ENCODE measurements at regions of chr17 and their contacts with region 1.

Region 1: DNA sequence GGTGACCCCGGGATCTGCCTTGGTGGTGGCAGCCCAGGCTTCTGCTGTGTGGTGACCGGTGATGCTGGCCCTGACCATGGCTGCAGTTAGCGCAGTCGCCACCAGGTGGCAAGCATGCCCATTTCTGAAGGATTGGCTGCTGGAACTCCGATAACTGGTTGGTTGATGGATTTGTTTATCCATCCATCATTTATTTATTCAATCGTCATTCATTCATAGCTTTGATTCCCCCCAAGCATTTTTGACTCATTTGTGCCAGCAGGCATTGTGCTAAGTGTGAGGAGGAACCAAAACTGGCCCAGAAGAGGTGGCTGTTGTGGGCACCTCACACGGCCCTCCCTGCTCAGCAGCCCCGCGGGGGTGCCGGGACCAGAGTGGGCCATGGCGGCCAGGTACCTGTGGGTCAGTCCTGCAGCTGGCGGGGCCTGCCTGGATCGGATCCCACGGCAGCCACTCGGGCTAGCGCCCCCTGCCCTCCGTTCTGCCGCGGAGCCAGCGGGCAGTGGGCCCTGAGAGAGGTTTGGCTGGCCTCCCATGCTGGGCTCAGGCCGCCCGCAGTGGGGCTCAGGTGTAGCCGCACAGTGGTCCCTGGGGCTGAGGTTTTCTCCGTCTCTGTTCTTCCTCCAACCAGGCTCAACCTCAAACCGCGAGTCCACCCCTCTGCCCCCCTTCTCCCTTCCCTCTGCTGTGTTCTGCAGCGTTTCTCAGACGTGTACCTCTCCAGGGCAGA is 28.8 kb upstream of the ITGA3 start:
- DNase-seq: peak; percentile 91 to 95
- ATAC-seq: peak; percentile 48 to 76
- H3K4me3 ChIP-seq: peak overlapping the region; percentile 46
- H3K27ac ChIP-seq: peak overlapping the region; percentile 94 to 99
- H3K4me1 ChIP-seq: peaks cover 42% of the 10 kb centered on the region
- CTCF ChIP-seq: peak; percentile 97
- EP300 ChIP-seq: no peak
- POLR2A ChIP-seq: no peak
- RAD21 ChIP-seq: peak; percentile 98

Region 2: DNA sequence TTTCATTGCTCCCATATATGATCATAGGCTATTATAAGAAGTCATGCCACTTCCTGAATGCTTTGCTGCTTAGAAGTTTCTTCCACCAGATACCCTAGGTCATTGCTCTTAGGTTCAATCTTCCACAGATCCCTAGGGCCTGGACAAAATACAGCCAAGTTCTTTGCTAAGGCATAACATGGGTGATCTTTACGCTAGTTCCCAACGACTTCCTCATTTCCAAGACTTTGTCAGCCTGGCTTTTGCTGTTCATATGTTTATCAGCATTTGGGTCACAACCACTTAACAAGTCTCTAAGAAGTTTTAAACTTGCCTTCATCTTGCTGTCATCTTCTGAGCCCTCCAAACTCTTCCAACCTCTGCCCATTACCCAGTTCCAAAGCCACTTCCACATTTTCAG is 11.9 kb before region 1 on chr17:
- CTCF ChIA-PET with region 1: interaction called, 40 read pairs
- POLR2A ChIA-PET with region 1: no interaction called
- DNase-seq: no peak
- ATAC-seq: no peak
- H3K4me3 ChIP-seq: no peak overlapping the region
- H3K27ac ChIP-seq: no peak overlapping the region
- H3K4me1 ChIP-seq: no peaks in the 10 kb centered on the region
- CTCF ChIP-seq: no peak
- EP300 ChIP-seq: no peak
- POLR2A ChIP-seq: no peak
- RAD21 ChIP-seq: no peak

Region 3: GRCh38 chr17:50047488-50048126 is 20.5 kb after region 1 on chr17:
- CTCF ChIA-PET with region 1: interaction called, 473 read pairs
- POLR2A ChIA-PET with region 1: interaction called, 140 read pairs
- DNase-seq: peak in 1 of 2 experiments; percentile 49
- ATAC-seq: peak in 1 of 2 experiments; percentile 5; a peak in 1 of 6 replicates
- H3K4me3 ChIP-seq: no peak overlapping the region
- H3K27ac ChIP-seq: peak overlapping the region; percentile 64 to 92
- H3K4me1 ChIP-seq: peaks cover 92% of the 10 kb centered on the region
- CTCF ChIP-seq: no peak
- EP300 ChIP-seq: no peak
- POLR2A ChIP-seq: no peak
- RAD21 ChIP-seq: no peak

Region 4: GRCh38 chr17:50064258-50065001 is 37.4 kb after region 1 on chr17:
- CTCF ChIA-PET with region 1: interaction called, 473 read pairs
- POLR2A ChIA-PET with region 1: interaction called, 90 read pairs
- DNase-seq: peak; percentile 94
- ATAC-seq: peak; percentile 51 to 71
- H3K4me3 ChIP-seq: peak overlapping the region; percentile 10; the same call in 1 of the 3 replicates
- H3K27ac ChIP-seq: peak overlapping the region; percentile 92 to 97
- H3K4me1 ChIP-seq: peaks cover 79% of the 10 kb centered on the region
- CTCF ChIP-seq: no peak
- EP300 ChIP-seq: peak; percentile 54 to 80; a peak in 3 of 5 replicates
- POLR2A ChIP-seq: no peak
- RAD21 ChIP-seq: peak in 1 of 2 experiments; percentile 43; a peak in 2 of 5 replicates

Region 5: GRCh38 chr17:50087246-50087911 is 60.3 kb after region 1 on chr17:
- CTCF ChIA-PET with region 1: interaction called, 200 read pairs
- POLR2A ChIA-PET with region 1: interaction called, 11 read pairs
- DNase-seq: peak; percentile 87 to 93
- ATAC-seq: peak; percentile 76 to 93
- H3K4me3 ChIP-seq: no peak overlapping the region
- H3K27ac ChIP-seq: peak overlapping the region in 1 of 2 experiments; percentile 37; a peak in 2 of 6 replicates
- H3K4me1 ChIP-seq: no peaks in the 10 kb centered on the region
- CTCF ChIP-seq: peak; percentile 97
- EP300 ChIP-seq: no peak
- POLR2A ChIP-seq: no peak
- RAD21 ChIP-seq: peak; percentile 97 to 99

Region 6: GRCh38 chr17:50114849-50115357 is 87.8 kb after region 1 on chr17:
- CTCF ChIA-PET with region 1: interaction called, 20 read pairs
- POLR2A ChIA-PET with region 1: no interaction called
- DNase-seq: peak; percentile 66 to 82
- ATAC-seq: peak; percentile 17 to 69; a peak in 4 of 6 replicates
- H3K4me3 ChIP-seq: no peak overlapping the region
- H3K27ac ChIP-seq: no peak overlapping the region
- H3K4me1 ChIP-seq: peaks cover 10% of the 10 kb centered on the region; the same call in 1 of the 3 replicates
- CTCF ChIP-seq: peak; percentile 76
- EP300 ChIP-seq: no peak
- POLR2A ChIP-seq: no peak
- RAD21 ChIP-seq: peak; percentile 66 to 83